ENCODE measurements at regions of chr18 and their contacts with region 1.

Region 1: DNA sequence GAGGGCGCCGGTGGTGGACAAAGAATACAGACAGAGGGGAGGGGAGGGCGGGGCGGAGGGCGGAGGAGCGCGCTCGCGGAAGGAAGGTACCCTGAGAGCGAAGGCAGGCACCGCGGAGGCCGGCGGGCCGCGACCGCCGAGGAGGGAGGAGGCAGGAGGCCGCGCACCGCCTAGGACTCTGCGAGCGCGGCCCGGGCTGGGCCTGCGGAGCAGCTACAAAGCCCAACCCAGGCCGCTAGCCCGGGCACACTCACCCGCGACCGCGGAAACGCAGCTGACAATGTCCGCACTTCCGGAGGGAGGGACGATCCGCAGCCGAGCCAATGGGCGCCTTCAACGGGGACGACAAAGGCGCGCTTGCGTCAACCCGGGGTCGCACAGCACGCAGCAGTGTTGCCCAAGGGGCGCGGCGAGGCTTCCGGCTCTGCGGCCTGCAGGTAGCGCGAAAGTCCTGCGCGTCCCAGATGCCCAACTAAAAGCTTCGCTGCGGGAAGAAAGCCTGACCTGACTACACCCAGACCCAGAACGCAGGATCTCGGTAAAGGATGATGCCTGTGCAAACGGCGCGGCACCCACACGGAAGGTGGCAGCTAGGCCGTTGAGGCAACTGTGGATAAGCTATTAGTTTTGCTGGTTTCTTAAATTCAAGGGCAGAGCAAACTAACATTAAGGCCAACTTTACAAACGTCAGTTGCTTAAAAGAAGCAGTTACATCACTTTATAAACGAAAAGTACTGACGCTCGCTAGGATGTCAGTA is at the start of gene C18orf32:
- DNase-seq: peak; percentile 93 to 97 (median 94)
- H3K4me3 ChIP-seq: peak within 1 kb of the TSS; percentile 66 to 71
- H3K4me3 Mint-ChIP-seq: peak within 1 kb of the TSS; percentile 91 to 99 (median 96)
- H3K27ac ChIP-seq: peak within 1 kb of the TSS; percentile 81
- H3K27ac Mint-ChIP-seq: peak within 1 kb of the TSS; percentile 93 to 100 (median 98)
- H3K4me1 ChIP-seq: peaks cover 66% of the 10 kb centered on the region
- H3K4me1 Mint-ChIP-seq: peaks cover 49 to 82% (median 63%) of the 10 kb centered on the region in 4 donors
- H3K27me3 ChIP-seq: no peaks in the 10 kb centered on the region
- H3K27me3 Mint-ChIP-seq: no peaks in the 10 kb centered on the region
- total RNA-seq, gene C18orf32: 48.7 to 55.3 TPM

Region 2: GRCh38 chr18:49464718-49465598 is 22.2 kb before region 1 on chr18:
- CTCF ChIA-PET with region 1: no interaction called
- POLR2A ChIA-PET with region 1: interaction called, 81 read pairs
- intact Hi-C with region 1: loop called (anchors 1 kb)
- DNase-seq: no peak
- H3K4me3 ChIP-seq: no peak overlapping the region
- H3K4me3 Mint-ChIP-seq: no peak overlapping the region
- H3K27ac ChIP-seq: no peak overlapping the region
- H3K27ac Mint-ChIP-seq: no peak overlapping the region
- H3K4me1 ChIP-seq: peaks cover 9% of the 10 kb centered on the region
- H3K4me1 Mint-ChIP-seq: peaks cover 6 to 14% (median 9%) of the 10 kb centered on the region in 4 donors
- H3K27me3 ChIP-seq: no peaks in the 10 kb centered on the region
- H3K27me3 Mint-ChIP-seq: peaks cover 1 to 4% of the 10 kb centered on the region in 2 donors

Region 3: DNA sequence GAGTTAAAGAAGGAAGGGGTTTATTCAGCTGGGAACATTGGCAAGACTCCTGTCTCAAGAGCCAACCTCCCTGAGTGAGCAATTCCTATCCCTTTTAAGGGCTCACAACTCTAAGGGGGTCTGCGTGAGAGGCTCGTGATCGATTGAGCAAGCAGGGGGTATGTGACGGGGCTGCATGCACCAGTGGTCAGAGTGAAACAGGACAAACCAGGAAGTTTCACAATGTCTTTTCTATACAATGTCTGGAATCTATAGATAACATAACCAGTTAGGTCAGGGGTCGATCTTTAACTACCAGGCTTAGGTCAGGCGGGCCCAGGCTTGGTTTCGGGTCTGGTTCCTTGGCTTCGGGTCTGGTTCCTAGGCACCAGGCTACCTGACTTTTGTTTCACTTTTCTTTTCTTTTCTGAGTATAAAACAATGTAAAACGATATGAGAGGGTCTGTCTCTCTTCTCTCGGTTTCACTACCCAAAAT is 44.6 kb after region 1 on chr18:
- CTCF ChIA-PET with region 1: no interaction called
- POLR2A ChIA-PET with region 1: no interaction called
- intact Hi-C with region 1: no loop called
- DNase-seq: no peak
- H3K4me3 ChIP-seq: no peak overlapping the region
- H3K4me3 Mint-ChIP-seq: peak overlapping the region in 2 of 8 donors; percentile 14 to 40
- H3K27ac ChIP-seq: no peak overlapping the region
- H3K27ac Mint-ChIP-seq: no peak overlapping the region
- H3K4me1 ChIP-seq: no peaks in the 10 kb centered on the region
- H3K4me1 Mint-ChIP-seq: no peaks in the 10 kb centered on the region
- H3K27me3 ChIP-seq: no peaks in the 10 kb centered on the region
- H3K27me3 Mint-ChIP-seq: peaks cover 7 to 25% of the 10 kb centered on the region in 2 donors

Region 4: GRCh38 chr18:49813319-49814146 is 326.4 kb after region 1 on chr18 and contains the start of gene ACAA2:
- CTCF ChIA-PET with region 1: no interaction called
- POLR2A ChIA-PET with region 1: interaction called, 13 read pairs
- intact Hi-C with region 1: loop called (anchors 1 kb)
- DNase-seq: peak; percentile 68 to 84 (median 70)
- H3K4me3 ChIP-seq: peak within 1 kb of the TSS; percentile 88 to 90
- H3K4me3 Mint-ChIP-seq: peak within 1 kb of the TSS; percentile 95 to 100 (median 96)
- H3K27ac ChIP-seq: peak within 1 kb of the TSS; percentile 80
- H3K27ac Mint-ChIP-seq: peak within 1 kb of the TSS; percentile 91 to 99 (median 97)
- H3K4me1 ChIP-seq: peaks cover 51% of the 10 kb centered on the region
- H3K4me1 Mint-ChIP-seq: peaks cover 39 to 69% (median 53%) of the 10 kb centered on the region in 4 donors
- H3K27me3 ChIP-seq: no peaks in the 10 kb centered on the region
- H3K27me3 Mint-ChIP-seq: no peaks in the 10 kb centered on the region
- total RNA-seq, gene ACAA2: 21.8 to 23.8 TPM

Region 5: GRCh38 chr18:50266248-50266704 is 779.1 kb after region 1 on chr18 and contains the start of gene CFAP53:
- CTCF ChIA-PET with region 1: interaction called, 3 read pairs
- POLR2A ChIA-PET with region 1: no interaction called
- intact Hi-C with region 1: loop called (anchors 5 kb)
- DNase-seq: peak; percentile 73 to 83 (median 77)
- H3K4me3 ChIP-seq: peak within 1 kb of the TSS; percentile 58 to 63
- H3K4me3 Mint-ChIP-seq: peak within 1 kb of the TSS; percentile 83 to 97 (median 90)
- H3K27ac ChIP-seq: peak within 1 kb of the TSS; percentile 49
- H3K27ac Mint-ChIP-seq: peak within 1 kb of the TSS; percentile 81 to 93 (median 90)
- H3K4me1 ChIP-seq: peaks cover 15% of the 10 kb centered on the region
- H3K4me1 Mint-ChIP-seq: peaks cover 11 to 23% (median 18%) of the 10 kb centered on the region in 4 donors
- H3K27me3 ChIP-seq: no peaks in the 10 kb centered on the region
- H3K27me3 Mint-ChIP-seq: no peaks in the 10 kb centered on the region
- total RNA-seq, gene CFAP53: 1.4 to 1.6 TPM

Region 6: DNA sequence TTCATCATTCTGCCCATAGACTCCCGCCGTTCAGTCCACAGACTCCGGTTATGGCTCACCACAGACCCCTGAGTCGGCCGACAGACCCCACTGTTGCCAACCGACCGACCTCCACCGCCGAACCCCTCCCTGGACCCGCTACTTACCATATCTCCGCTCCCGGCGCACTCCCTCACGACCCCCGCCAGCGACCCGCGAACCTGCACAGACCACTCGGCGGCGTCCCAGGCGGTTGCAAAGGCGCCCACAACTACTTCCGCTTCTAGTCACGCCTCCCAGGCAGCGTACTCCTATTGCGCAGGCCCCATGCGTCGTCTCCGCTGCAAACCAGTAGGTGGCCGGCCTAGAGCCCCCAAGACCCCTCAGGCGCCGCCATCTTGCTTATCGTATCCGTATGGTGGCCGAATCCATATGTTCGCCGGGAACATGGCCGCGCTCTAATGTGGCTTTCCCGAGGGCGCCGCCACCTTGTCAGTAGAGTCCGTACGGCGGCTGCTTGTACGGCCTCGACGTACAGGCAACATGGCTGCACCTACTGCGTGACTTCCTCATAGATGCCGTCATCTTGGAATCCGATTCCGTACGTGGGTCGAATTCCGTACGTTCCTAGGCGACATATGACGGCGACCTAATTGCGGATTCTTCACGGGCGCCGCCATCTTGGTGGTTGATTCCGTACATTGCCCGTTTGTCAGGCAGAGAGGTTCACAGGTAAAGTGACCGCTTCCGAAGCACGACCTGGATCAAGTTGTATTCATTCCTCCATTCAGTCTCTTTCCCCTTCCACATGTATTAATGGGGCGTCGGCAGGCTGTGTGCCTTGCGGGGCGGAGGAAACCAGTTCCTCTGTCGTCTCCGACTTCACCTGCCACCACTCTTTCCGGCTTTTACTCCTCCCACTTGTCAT is 800.6 kb after region 1 on chr18 and contains the start of gene CXXC1:
- CTCF ChIA-PET with region 1: no interaction called
- POLR2A ChIA-PET with region 1: interaction called, 5 read pairs
- intact Hi-C with region 1: loop called (anchors 1 kb)
- DNase-seq: peak; percentile 96 to 99 (median 98)
- H3K4me3 ChIP-seq: peak within 1 kb of the TSS; percentile 82 to 88
- H3K4me3 Mint-ChIP-seq: peak within 1 kb of the TSS; percentile 96 to 100 (median 99)
- H3K27ac ChIP-seq: peak within 1 kb of the TSS; percentile 82
- H3K27ac Mint-ChIP-seq: peak within 1 kb of the TSS; percentile 91 to 100 (median 100)
- H3K4me1 ChIP-seq: peaks cover 14% of the 10 kb centered on the region
- H3K4me1 Mint-ChIP-seq: peaks cover 19 to 44% (median 28%) of the 10 kb centered on the region in 4 donors
- H3K27me3 ChIP-seq: no peaks in the 10 kb centered on the region
- H3K27me3 Mint-ChIP-seq: no peaks in the 10 kb centered on the region
- total RNA-seq, gene CXXC1: 165 to 191 TPM